Transverse colon (tissue), 4 donors: ENCODE measurements at regions of chrX and their contacts with region 1.

Region 1: DNA sequence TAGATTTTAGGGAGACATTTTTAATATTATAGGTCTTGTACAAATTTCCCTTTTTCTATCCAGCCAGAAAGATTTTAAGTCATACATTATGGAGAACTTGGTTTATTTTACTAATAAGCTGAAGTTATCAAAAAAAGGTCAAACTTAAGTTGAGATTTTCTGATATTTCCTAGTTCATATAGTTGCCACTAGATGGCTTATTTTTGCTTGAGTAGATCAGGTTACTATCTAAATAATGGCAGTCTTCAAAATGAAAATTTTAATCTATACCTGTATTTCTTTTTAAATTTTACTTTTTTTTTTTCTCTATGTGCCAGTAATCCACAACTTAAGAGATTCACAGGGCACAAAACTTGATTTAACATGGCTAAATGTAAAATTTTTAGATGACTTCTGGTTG is 52.3 kb downstream of the USP9X start:
- DNase-seq: no peak
- H3K4me3 ChIP-seq: no peak overlapping the region
- H3K27ac ChIP-seq: no peak overlapping the region
- H3K4me1 ChIP-seq: no peaks in the 10 kb centered on the region
- H3K27me3 ChIP-seq: no peaks in the 10 kb centered on the region
- CTCF ChIP-seq: peak in 3 of 5 experiments; percentile 23 to 32 (median 27)
- EP300 ChIP-seq: no peak
- POLR2A ChIP-seq: no peak

Region 2: DNA sequence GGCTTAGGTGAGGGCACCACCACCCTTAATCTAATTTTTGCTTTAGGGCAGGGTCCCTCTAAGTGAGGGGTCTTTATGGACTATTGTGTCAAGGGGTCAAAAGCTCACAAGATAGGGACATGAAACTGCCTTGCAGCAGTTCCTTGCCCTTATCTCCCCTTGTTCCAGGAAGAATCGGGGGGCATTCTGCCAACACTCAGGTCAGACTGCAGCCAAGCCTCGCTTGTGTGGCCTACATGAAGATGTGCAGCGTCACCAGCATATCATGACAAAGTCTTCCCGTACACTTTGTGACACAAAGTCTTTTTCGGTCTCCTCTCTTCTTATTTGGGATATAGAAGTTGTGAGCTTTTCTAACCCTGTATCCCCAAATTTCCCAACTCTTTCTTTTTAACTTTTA is 69.9 kb before region 1 on chrX:
- in situ Hi-C with region 1: no loop called
- intact Hi-C with region 1: loop called (anchors 2 kb)
- DNase-seq: no peak
- H3K4me3 ChIP-seq: no peak overlapping the region
- H3K27ac ChIP-seq: no peak overlapping the region
- H3K4me1 ChIP-seq: no peaks in the 10 kb centered on the region
- H3K27me3 ChIP-seq: no peaks in the 10 kb centered on the region
- CTCF ChIP-seq: no peak
- EP300 ChIP-seq: no peak
- POLR2A ChIP-seq: no peak